HEK293 (cell line): ENCODE measurements at regions of chr12 and their contacts with region 1.

Region 1: DNA sequence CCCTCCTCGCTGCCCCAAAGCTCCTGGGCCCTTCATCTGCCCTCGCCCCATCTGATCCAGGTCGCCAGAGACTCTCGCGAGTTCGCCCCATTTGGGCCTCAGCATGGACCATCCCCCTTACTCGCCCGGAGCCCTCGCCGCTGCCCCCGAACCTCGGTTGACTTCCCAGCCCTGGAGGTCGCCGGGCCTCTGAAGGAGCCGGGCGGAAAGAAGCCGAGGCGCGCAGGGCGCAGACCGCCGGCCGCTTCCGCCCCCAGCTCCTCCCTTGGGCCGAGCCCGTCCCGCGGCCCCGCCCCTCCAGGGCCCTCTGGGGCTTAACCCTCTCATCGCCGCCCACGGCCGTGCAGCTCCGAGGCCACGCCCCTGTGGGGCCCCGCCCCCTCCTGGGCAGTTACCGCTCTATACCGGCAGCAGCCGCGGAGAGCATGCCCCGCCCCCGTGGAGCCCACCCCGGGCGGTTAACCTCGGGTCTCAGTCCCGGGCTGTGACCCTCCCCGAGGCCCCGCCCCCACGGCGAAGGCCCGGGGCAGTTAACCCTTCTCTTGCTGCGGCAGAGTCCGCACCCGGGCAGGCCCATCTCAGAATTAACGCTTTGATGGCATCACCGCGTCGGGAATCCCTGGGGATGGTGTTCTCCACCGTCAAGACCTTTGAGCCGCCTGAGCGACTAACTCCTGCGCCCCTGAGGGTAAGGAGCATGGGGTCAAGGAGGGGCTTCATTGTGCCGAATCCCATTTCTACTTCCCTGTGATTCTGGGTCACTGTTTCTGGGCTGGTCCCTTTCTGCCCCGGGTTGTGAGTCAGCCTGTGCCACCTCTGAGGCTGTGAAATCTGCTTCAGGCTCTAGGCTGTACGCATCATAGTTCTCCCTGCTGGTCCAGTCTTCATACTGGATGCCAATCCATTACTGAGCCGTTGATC is at the start of gene SPSB2:
- H3K4me3 ChIP-seq: peak within 1 kb of the TSS; percentile 67
- H3K27ac ChIP-seq: peak within 1 kb of the TSS; percentile 54; the same call in 1 of the 2 replicates
- H3K4me1 ChIP-seq: peaks cover 2% of the 10 kb centered on the region; the same call in 1 of the 2 replicates
- CTCF ChIP-seq: no peak

Region 2: GRCh38 chr12:6263931-6264330 is 609.4 kb before region 1 on chr12:
- CTCF ChIA-PET with region 1: no interaction called
- POLR2A ChIA-PET with region 1: no interaction called
- H3K4me3 ChIP-seq: no peak overlapping the region
- H3K27ac ChIP-seq: no peak overlapping the region
- H3K4me1 ChIP-seq: peaks cover 6% of the 10 kb centered on the region
- CTCF ChIP-seq: no peak

Region 3: DNA sequence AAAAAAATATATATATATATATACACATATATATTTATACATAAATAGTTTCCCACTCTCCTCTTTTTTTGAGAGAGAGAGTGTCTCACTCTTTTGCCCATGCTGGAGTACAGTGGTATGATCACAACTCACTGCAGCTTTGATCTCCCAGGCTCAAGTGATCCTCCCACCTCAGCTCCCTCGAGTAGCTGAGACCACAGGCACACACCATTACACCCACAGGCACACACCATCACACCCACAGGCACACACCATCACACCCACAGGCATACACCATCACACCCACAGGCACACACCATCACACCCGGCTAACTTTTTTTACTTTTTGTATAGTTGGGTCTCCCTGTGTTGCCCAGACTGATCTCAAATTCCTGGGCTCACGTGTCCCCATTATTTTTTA is 353.2 kb before region 1 on chr12:
- CTCF ChIA-PET with region 1: no interaction called
- POLR2A ChIA-PET with region 1: no interaction called
- H3K4me3 ChIP-seq: no peak overlapping the region
- H3K27ac ChIP-seq: no peak overlapping the region
- H3K4me1 ChIP-seq: no peaks in the 10 kb centered on the region
- CTCF ChIP-seq: no peak

Region 4: GRCh38 chr12:6839482-6840201 is 33.7 kb before region 1 on chr12:
- CTCF ChIA-PET with region 1: interaction called, 3 read pairs
- POLR2A ChIA-PET with region 1: interaction called, 16 read pairs
- H3K4me3 ChIP-seq: no peak overlapping the region
- H3K27ac ChIP-seq: no peak overlapping the region
- H3K4me1 ChIP-seq: no peaks in the 10 kb centered on the region
- CTCF ChIP-seq: no peak

Region 5: GRCh38 chr12:6884539-6884938 is 11.2 kb after region 1 on chr12:
- CTCF ChIA-PET with region 1: interaction called, 22 read pairs
- POLR2A ChIA-PET with region 1: interaction called, 23 read pairs
- H3K4me3 ChIP-seq: no peak overlapping the region
- H3K27ac ChIP-seq: no peak overlapping the region
- H3K4me1 ChIP-seq: no peaks in the 10 kb centered on the region
- CTCF ChIP-seq: no peak

Region 6: GRCh38 chr12:6896846-6897435 is 23.6 kb after region 1 on chr12:
- CTCF ChIA-PET with region 1: interaction called, 35 read pairs
- POLR2A ChIA-PET with region 1: interaction called, 56 read pairs
- H3K4me3 ChIP-seq: no peak overlapping the region
- H3K27ac ChIP-seq: no peak overlapping the region
- H3K4me1 ChIP-seq: 0 out of 2 replicates have a peak, but pooled peaks cover 3% of the 10 kb centered on the region
- CTCF ChIP-seq: no peak

Region 7: GRCh38 chr12:6927379-6928024 is 54.1 kb after region 1 on chr12 and contains the start of gene ATN1:
- CTCF ChIA-PET with region 1: interaction called, 25 read pairs
- POLR2A ChIA-PET with region 1: interaction called, 32 read pairs
- H3K4me3 ChIP-seq: peak within 1 kb of the TSS; percentile 74
- H3K27ac ChIP-seq: peak within 1 kb of the TSS; percentile 80
- H3K4me1 ChIP-seq: peaks cover 28% of the 10 kb centered on the region
- CTCF ChIP-seq: 0 out of 2 replicates have a peak, but pooled peaks have one; percentile 38

Region 8: DNA sequence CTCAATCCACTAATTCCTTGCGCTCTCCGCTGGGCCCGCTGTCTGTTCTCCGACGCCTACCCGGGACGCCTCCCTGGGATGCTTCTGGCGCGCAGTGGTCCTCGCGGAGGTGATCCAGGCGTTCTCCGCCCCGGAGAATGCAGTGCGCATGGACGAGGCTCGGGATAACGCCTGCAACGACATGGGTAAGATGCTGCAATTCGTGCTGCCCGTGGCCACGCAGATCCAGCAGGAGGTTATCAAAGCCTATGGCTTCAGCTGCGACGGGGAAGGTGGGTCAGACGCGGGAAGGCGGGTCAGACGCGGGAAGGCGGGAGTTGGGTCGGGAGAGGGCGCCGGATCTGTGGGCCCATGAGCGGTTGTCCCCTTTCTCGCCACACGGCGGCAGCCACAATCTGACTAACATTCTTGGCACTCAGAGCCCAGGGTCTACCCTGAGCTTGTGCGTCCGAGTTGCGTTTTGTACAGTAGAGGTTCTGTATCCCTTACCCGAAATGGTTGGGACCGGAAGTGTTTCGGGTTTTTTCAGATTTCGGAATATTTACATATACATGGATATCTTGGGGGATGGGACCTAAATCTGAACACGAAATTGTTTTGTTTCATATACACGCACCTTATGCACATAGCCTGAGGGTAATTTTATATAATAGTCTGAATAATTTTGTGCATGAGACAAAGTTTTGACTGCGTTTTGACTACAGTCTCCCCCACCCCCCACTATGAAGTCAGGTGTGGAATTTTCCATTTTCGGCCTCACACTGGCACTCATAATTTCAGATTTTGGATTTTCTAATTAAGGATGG is 71.2 kb after region 1 on chr12:
- CTCF ChIA-PET with region 1: interaction called, 10 read pairs
- POLR2A ChIA-PET with region 1: interaction called, 45 read pairs
- H3K4me3 ChIP-seq: peak overlapping the region; percentile 61
- H3K27ac ChIP-seq: peak overlapping the region; percentile 87
- H3K4me1 ChIP-seq: peaks cover 14% of the 10 kb centered on the region
- CTCF ChIP-seq: peak; percentile 99

Region 9: DNA sequence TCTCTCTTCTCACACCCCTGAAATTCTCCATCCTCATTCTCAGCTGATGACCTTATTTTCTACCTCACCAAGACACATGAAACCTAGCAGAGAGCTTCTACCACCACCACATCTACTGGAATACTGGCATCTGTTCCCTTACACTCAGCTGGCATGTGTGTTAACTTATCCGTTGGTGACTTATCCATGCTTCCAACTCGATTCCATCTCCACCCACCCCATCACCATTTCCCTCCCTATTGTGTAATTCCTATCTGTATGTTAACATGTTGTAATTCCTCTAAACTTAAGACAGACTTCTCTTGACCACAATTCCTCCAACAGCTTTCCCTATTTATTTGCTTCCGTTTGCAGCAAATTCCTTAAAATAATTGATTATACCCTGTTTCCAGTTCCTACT is 202.6 kb after region 1 on chr12:
- CTCF ChIA-PET with region 1: no interaction called
- POLR2A ChIA-PET with region 1: no interaction called
- H3K4me3 ChIP-seq: no peak overlapping the region
- H3K27ac ChIP-seq: no peak overlapping the region
- H3K4me1 ChIP-seq: no peaks in the 10 kb centered on the region
- CTCF ChIP-seq: no peak